CD8-positive, alpha-beta T cell (primary cell): ENCODE measurements at regions of chr17 and their contacts with region 1.

Region 1: GRCh38 chr17:6640536-6641373 is at the starts of genes KIAA0753 and TXNDC17:
- DNase-seq: peak; percentile 74 to 96 (median 91)
- ATAC-seq: peak; percentile 88
- H3K4me3 ChIP-seq: peak within 1 kb of the TSS; percentile 77 to 89
- H3K4me3 Mint-ChIP-seq: peak within 1 kb of the TSS; percentile 97
- H3K27ac ChIP-seq: peak within 1 kb of the TSS; percentile 89 to 91
- H3K27ac Mint-ChIP-seq: peak within 1 kb of the TSS; percentile 98
- H3K4me1 ChIP-seq: peaks cover 25% of the 10 kb centered on the region
- H3K4me1 Mint-ChIP-seq: peaks cover 45% of the 10 kb centered on the region
- H3K27me3 ChIP-seq: no peaks in the 10 kb centered on the region
- H3K27me3 Mint-ChIP-seq: no peaks in the 10 kb centered on the region
- CTCF ChIP-seq: no peak
- total RNA-seq, gene KIAA0753: 5.1 to 6.9 TPM
- total RNA-seq, gene TXNDC17: 20.0 to 21.4 TPM

Region 2: GRCh38 chr17:6443692-6444569 is 196.8 kb before region 1 on chr17 and contains the start of gene PIMREG:
- CTCF ChIA-PET with region 1: no interaction called
- POLR2A ChIA-PET with region 1: no interaction called
- intact Hi-C with region 1: loop called in 1 of 2 experiments (anchors 10 kb)
- DNase-seq: peak; percentile 79 to 91 (median 90)
- ATAC-seq: peak; percentile 96
- H3K4me3 ChIP-seq: peak within 1 kb of the TSS; percentile 68 to 94
- H3K4me3 Mint-ChIP-seq: peak within 1 kb of the TSS; percentile 85
- H3K27ac ChIP-seq: peak within 1 kb of the TSS; percentile 25 to 37
- H3K27ac Mint-ChIP-seq: peak within 1 kb of the TSS; percentile 77
- H3K4me1 ChIP-seq: peaks cover 6% of the 10 kb centered on the region
- H3K4me1 Mint-ChIP-seq: peaks cover 12% of the 10 kb centered on the region
- H3K27me3 ChIP-seq: no peaks in the 10 kb centered on the region
- H3K27me3 Mint-ChIP-seq: peaks cover 10% of the 10 kb centered on the region
- CTCF ChIP-seq: no peak
- total RNA-seq, gene PIMREG: not detected

Region 3: GRCh38 chr17:6651357-6651918 is 10.7 kb after region 1 on chr17 and contains the starts of genes C17orf100 and MED31:
- CTCF ChIA-PET with region 1: no interaction called
- POLR2A ChIA-PET with region 1: interaction called, 38 read pairs
- intact Hi-C with region 1: loop called (anchors 1 kb)
- DNase-seq: peak; percentile 90 to 97 (median 94)
- ATAC-seq: peak; percentile 88
- H3K4me3 ChIP-seq: peak within 1 kb of the TSS; percentile 84 to 86
- H3K4me3 Mint-ChIP-seq: peak within 1 kb of the TSS; percentile 97
- H3K27ac ChIP-seq: peak within 1 kb of the TSS; percentile 99 to 100
- H3K27ac Mint-ChIP-seq: peak within 1 kb of the TSS; percentile 100
- H3K4me1 ChIP-seq: peaks cover 23% of the 10 kb centered on the region
- H3K4me1 Mint-ChIP-seq: peaks cover 69% of the 10 kb centered on the region
- H3K27me3 ChIP-seq: no peaks in the 10 kb centered on the region
- H3K27me3 Mint-ChIP-seq: no peaks in the 10 kb centered on the region
- CTCF ChIP-seq: no peak
- total RNA-seq, gene C17orf100: 0.39 to 0.73 TPM
- total RNA-seq, gene MED31: 21.4 to 25.6 TPM

Region 4: DNA sequence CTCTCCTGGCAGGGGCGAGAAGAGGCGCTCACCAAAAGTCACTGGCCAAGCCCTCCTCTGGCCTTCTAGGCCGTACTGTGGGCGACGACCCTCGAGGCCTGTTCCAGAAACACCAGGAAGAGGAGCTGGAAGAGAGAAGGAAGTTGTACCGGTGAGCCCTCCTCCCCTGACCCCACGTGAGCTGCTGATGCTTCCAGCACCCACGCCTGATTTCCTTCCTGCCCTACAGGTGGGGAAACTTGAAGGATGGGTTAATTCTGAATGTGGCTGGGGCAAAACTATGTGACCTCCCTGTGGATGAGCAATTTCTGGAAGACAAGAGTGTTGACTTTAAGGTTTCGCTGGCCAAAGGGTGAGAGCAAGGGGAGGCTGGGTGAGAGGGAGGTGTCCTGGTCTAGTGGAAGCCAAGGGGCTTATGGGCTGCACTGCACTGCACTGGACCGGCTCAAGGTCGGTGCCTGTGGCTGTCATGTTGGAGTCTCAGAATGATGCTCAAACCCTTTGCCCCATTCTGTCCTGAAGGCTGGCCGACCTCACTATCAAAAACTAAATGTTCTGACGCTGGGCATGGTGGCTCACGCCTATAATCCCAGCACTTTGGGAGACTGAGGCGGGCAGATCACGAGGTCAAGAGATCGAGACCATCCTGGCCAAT is 17.0 kb after region 1 on chr17:
- CTCF ChIA-PET with region 1: no interaction called
- POLR2A ChIA-PET with region 1: no interaction called
- intact Hi-C with region 1: loop called (anchors 1 to 2 kb)
- DNase-seq: no peak
- ATAC-seq: no peak
- H3K4me3 ChIP-seq: peak overlapping the region; percentile 50 to 59
- H3K4me3 Mint-ChIP-seq: peak overlapping the region; percentile 90
- H3K27ac ChIP-seq: peak overlapping the region; percentile 16 to 39
- H3K27ac Mint-ChIP-seq: peak overlapping the region; percentile 92
- H3K4me1 ChIP-seq: peaks cover 7% of the 10 kb centered on the region
- H3K4me1 Mint-ChIP-seq: peaks cover 52% of the 10 kb centered on the region
- H3K27me3 ChIP-seq: peaks cover 0 to 2% of the 10 kb centered on the region in 2 experiments
- H3K27me3 Mint-ChIP-seq: no peaks in the 10 kb centered on the region
- CTCF ChIP-seq: no peak

Region 5: GRCh38 chr17:6666077-6666521 is 25.3 kb after region 1 on chr17:
- CTCF ChIA-PET with region 1: no interaction called
- POLR2A ChIA-PET with region 1: no interaction called
- intact Hi-C with region 1: loop called in 1 of 2 experiments (anchors 1 kb)
- DNase-seq: peak in 6 of 9 experiments; percentile 16 to 69 (median 50)
- ATAC-seq: peak; percentile 65
- H3K4me3 ChIP-seq: no peak overlapping the region
- H3K4me3 Mint-ChIP-seq: no peak overlapping the region
- H3K27ac ChIP-seq: no peak overlapping the region
- H3K27ac Mint-ChIP-seq: no peak overlapping the region
- H3K4me1 ChIP-seq: no peaks in the 10 kb centered on the region
- H3K4me1 Mint-ChIP-seq: peaks cover 15% of the 10 kb centered on the region
- H3K27me3 ChIP-seq: peaks cover 0 to 2% of the 10 kb centered on the region in 2 experiments
- H3K27me3 Mint-ChIP-seq: no peaks in the 10 kb centered on the region
- CTCF ChIP-seq: peak; percentile 77

Region 6: DNA sequence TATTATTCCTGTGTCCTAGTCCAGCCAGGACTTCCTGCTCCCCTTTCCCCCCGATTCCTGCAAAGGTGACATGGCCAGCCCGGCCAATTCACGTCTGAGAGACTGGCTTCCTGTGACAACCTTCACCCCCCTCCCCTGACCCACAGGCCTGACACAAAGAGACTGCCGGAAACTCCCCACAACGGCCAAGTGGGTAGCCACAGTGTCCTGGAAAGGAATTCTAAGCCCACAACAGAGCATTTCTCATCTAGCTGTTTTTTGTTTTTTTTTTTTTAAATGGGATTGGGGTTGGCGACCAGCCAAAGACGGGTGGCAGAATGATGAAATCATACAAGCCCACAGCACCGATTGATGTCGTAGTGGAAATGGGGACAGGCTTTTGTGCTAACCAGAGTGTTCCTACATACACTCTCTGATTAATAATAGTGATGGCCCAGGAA is 112.3 kb after region 1 on chr17:
- CTCF ChIA-PET with region 1: no interaction called
- POLR2A ChIA-PET with region 1: no interaction called
- intact Hi-C with region 1: loop called in 1 of 2 experiments (anchors 2 kb)
- DNase-seq: peak in 8 of 9 experiments; percentile 42 to 86 (median 56)
- ATAC-seq: peak; percentile 46
- H3K4me3 ChIP-seq: no peak overlapping the region
- H3K4me3 Mint-ChIP-seq: peak overlapping the region; percentile 4
- H3K27ac ChIP-seq: peak overlapping the region in 1 of 2 experiments; percentile 66
- H3K27ac Mint-ChIP-seq: peak overlapping the region; percentile 62
- H3K4me1 ChIP-seq: peaks cover 51% of the 10 kb centered on the region
- H3K4me1 Mint-ChIP-seq: peaks cover 45% of the 10 kb centered on the region
- H3K27me3 ChIP-seq: no peaks in the 10 kb centered on the region
- H3K27me3 Mint-ChIP-seq: no peaks in the 10 kb centered on the region
- CTCF ChIP-seq: no peak

Region 7: GRCh38 chr17:7014261-7014994 is 373.7 kb after region 1 on chr17:
- CTCF ChIA-PET with region 1: no interaction called
- POLR2A ChIA-PET with region 1: no interaction called
- intact Hi-C with region 1: loop called in 1 of 2 experiments (anchors 1 kb)
- DNase-seq: peak; percentile 94 to 100 (median 97)
- ATAC-seq: peak; percentile 79
- H3K4me3 ChIP-seq: peak overlapping the region; percentile 69 to 70
- H3K4me3 Mint-ChIP-seq: peak overlapping the region; percentile 98
- H3K27ac ChIP-seq: peak overlapping the region; percentile 95 to 99
- H3K27ac Mint-ChIP-seq: peak overlapping the region; percentile 100
- H3K4me1 ChIP-seq: peaks cover 63% of the 10 kb centered on the region
- H3K4me1 Mint-ChIP-seq: peaks cover 78% of the 10 kb centered on the region
- H3K27me3 ChIP-seq: no peaks in the 10 kb centered on the region
- H3K27me3 Mint-ChIP-seq: no peaks in the 10 kb centered on the region
- CTCF ChIP-seq: peak; percentile 61